Heart right ventricle (tissue), 16 donors: ENCODE measurements at regions of chr2 and their contacts with region 1.

Region 1: GRCh38 chr2:154490530-154490929 is 208.0 kb upstream of the KCNJ3 start:
- DNase-seq: no peak
- ATAC-seq: no peak
- H3K4me3 ChIP-seq: no peak overlapping the region
- H3K27ac ChIP-seq: no peak overlapping the region
- H3K4me1 ChIP-seq: peaks cover 0 to 19% (median 5%) of the 10 kb centered on the region in 9 donors
- H3K27me3 ChIP-seq: no peaks in the 10 kb centered on the region
- CTCF ChIP-seq: no peak

Region 2: GRCh38 chr2:154532763-154533162 is 42.2 kb after region 1 on chr2:
- intact Hi-C with region 1: loop called in 1 of 10 experiments (anchors 5 kb)
- DNase-seq: no peak
- ATAC-seq: no peak
- H3K4me3 ChIP-seq: no peak overlapping the region
- H3K27ac ChIP-seq: no peak overlapping the region
- H3K4me1 ChIP-seq: peaks cover 0 to 12% (median 0%) of the 10 kb centered on the region in 9 donors
- H3K27me3 ChIP-seq: no peaks in the 10 kb centered on the region
- CTCF ChIP-seq: no peak